ENCODE measurements at regions of chr1 and their contacts with region 1.

Region 1: GRCh38 chr1:23691499-23692307 is at the start of gene RPL11:
- DNase-seq: peak; percentile 89 to 91
- H3K4me3 ChIP-seq: peak within 1 kb of the TSS; percentile 54
- H3K4me3 Mint-ChIP-seq: peak within 1 kb of the TSS; percentile 78
- H3K27ac Mint-ChIP-seq: peak within 1 kb of the TSS; percentile 85
- H3K4me1 ChIP-seq: peaks cover 13% of the 10 kb centered on the region
- H3K4me1 Mint-ChIP-seq: peaks cover 26% of the 10 kb centered on the region
- H3K27me3 ChIP-seq: no peaks in the 10 kb centered on the region
- H3K27me3 Mint-ChIP-seq: no peaks in the 10 kb centered on the region
- CTCF ChIP-seq: peak; percentile 49 to 77
- total RNA-seq, gene RPL11: 1,040 and 1,063 TPM in 2 replicates

Region 2: DNA sequence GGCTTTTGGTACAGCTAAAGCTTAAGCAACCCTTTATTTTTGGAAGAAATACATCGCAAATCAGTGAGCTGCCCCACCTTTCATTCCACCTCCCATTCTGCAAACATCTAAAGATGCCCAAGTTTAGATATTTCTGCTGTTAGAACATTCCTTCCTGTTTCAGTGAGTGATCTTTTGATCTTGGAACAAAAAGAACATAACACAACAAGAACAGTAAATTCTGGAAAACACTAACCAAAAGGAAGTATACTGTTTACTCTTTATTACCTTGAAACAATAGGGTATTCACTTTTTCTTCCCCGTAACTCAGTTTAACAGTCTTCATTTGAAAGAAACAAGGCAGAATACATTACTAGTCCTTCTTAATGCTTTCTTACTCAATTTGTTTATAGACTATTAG is 388.2 kb before region 1 on chr1:
- CTCF ChIA-PET with region 1: interaction called, 10 read pairs
- POLR2A ChIA-PET with region 1: no interaction called
- intact Hi-C with region 1: no loop called
- DNase-seq: no peak
- H3K4me3 ChIP-seq: no peak overlapping the region
- H3K4me3 Mint-ChIP-seq: no peak overlapping the region
- H3K27ac Mint-ChIP-seq: no peak overlapping the region
- H3K4me1 ChIP-seq: no peaks in the 10 kb centered on the region
- H3K4me1 Mint-ChIP-seq: no peaks in the 10 kb centered on the region
- H3K27me3 ChIP-seq: no peaks in the 10 kb centered on the region
- H3K27me3 Mint-ChIP-seq: no peaks in the 10 kb centered on the region
- CTCF ChIP-seq: no peak

Region 3: DNA sequence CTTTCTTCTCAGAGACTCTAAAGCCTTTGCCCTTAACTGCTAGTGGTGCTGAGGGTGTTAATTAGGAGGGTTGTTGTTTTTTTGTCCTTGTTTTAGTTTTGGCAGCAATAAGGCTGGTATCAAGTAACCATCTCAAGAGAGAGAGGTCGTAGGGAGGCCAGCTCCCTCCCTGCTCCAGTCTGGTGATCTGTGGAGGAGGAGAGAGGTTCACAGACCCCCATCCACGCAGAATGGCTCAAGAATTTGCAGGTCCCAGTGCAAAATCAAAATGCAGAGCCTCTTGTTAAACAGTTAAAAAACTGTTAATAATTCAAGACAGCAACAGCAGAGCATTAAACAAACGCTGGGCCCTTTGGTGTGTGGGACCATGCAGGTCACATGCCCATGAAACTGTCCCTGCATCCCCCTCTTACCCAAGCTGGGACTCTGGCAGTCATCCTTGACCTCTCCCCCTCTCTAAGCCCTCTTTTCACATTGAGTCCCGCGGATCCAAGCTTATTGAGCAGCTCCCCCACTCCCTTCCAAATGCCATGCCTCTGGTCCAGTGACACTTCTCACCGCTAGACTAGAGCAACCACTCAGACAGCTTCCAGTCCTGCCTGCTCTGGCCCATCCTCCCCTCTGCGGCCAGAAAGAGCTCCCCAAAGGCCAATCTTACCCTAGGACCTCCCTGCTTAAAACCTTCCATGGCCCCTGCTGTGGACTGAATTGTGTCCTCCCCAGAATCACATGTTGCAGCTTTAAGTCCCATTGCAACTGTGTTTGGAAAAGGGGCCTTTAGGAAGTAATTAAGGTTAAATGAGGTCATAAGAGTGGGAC is 47.8 kb before region 1 on chr1:
- CTCF ChIA-PET with region 1: no interaction called
- POLR2A ChIA-PET with region 1: no interaction called
- intact Hi-C with region 1: no loop called
- DNase-seq: no peak
- H3K4me3 ChIP-seq: no peak overlapping the region
- H3K4me3 Mint-ChIP-seq: no peak overlapping the region
- H3K27ac Mint-ChIP-seq: no peak overlapping the region
- H3K4me1 ChIP-seq: no peaks in the 10 kb centered on the region
- H3K4me1 Mint-ChIP-seq: no peaks in the 10 kb centered on the region
- H3K27me3 ChIP-seq: no peaks in the 10 kb centered on the region
- H3K27me3 Mint-ChIP-seq: no peaks in the 10 kb centered on the region
- CTCF ChIP-seq: no peak

Region 4: DNA sequence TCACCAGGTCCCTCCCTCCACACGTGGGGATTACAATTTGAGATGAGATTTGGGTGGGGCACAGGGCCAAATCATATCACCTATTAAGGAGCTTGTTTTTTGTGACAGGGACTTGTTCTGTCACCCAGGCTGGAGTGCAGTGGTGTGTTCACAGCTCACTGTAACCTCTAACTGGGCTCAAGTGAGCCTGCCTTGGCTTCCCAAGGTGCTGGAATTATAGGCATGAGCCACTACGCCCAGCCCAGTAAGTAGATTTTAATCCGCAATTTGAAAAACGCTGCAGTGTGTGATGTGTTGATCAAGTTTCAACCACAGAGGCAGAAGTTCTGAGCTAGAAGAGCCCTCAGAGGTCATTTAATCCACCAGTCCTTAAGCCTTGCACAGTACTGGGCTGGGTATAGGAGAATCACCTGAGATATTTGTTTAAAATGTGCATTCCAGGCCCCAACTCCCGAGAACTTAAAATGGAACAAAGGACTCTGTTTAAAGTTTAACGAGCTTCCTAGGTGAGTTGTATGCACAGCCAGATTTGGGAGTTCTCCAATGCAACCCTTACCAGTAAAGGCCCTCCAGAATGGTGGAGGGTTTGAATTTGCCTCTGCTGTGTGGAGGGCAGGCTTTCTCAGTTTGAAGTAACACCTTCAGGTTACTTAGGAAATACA is 13.3 kb after region 1 on chr1:
- CTCF ChIA-PET with region 1: interaction called, 6 read pairs
- POLR2A ChIA-PET with region 1: interaction called, 11 read pairs
- intact Hi-C with region 1: no loop called
- DNase-seq: peak in 1 of 2 experiments; percentile 49
- H3K4me3 ChIP-seq: no peak overlapping the region
- H3K4me3 Mint-ChIP-seq: peak overlapping the region; percentile 33
- H3K27ac Mint-ChIP-seq: peak overlapping the region; percentile 79
- H3K4me1 ChIP-seq: peaks cover 17% of the 10 kb centered on the region
- H3K4me1 Mint-ChIP-seq: peaks cover 7% of the 10 kb centered on the region
- H3K27me3 ChIP-seq: no peaks in the 10 kb centered on the region
- H3K27me3 Mint-ChIP-seq: no peaks in the 10 kb centered on the region
- CTCF ChIP-seq: no peak

Region 5: DNA sequence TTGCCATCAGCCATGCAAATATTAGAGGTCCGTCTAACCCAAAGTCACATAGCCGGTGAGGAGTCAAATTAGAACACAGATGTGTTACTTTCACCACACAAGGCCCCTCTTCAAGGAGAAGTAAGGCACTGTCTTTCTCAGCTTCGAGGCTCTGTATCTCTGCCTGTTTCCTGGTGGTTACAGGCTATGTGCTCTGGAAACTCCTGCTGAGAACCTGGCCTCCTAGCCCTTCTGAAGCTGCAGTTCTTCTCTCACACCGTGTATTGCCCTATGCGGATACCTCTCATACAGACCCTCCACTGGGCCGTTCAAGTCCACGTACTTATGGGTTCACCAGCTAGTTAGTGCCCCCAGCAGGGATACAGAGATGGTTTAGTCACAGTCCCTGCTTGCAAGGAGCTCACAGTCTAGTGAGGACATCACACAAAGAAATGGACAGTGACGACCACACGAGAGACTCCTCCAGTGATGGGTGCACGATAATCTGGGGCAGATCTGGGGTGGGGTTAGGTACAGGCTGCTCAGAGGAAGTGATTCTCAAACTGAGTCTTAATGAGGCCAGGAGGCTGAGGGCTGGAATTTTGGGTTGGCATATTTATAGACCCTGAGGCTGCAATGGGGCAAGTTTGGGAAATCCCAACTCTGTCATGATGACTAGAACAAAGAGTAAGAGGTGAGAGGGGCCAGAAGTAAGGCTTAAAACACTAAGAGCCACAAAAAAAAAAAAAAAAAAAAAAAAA is 28.7 kb after region 1 on chr1:
- CTCF ChIA-PET with region 1: no interaction called
- POLR2A ChIA-PET with region 1: no interaction called
- intact Hi-C with region 1: no loop called
- DNase-seq: no peak
- H3K4me3 ChIP-seq: no peak overlapping the region
- H3K4me3 Mint-ChIP-seq: no peak overlapping the region
- H3K27ac Mint-ChIP-seq: no peak overlapping the region
- H3K4me1 ChIP-seq: no peaks in the 10 kb centered on the region
- H3K4me1 Mint-ChIP-seq: peaks cover 7% of the 10 kb centered on the region
- H3K27me3 ChIP-seq: no peaks in the 10 kb centered on the region
- H3K27me3 Mint-ChIP-seq: no peaks in the 10 kb centered on the region
- CTCF ChIP-seq: no peak

Region 6: GRCh38 chr1:23743287-23744052 is 51.8 kb after region 1 on chr1 and contains the start of gene ELOA:
- CTCF ChIA-PET with region 1: interaction called, 4 read pairs
- POLR2A ChIA-PET with region 1: interaction called, 6 read pairs
- intact Hi-C with region 1: loop called (anchors 5 kb)
- DNase-seq: peak; percentile 56 to 73
- H3K4me3 ChIP-seq: peak within 1 kb of the TSS; percentile 92
- H3K4me3 Mint-ChIP-seq: peak within 1 kb of the TSS; percentile 82
- H3K27ac Mint-ChIP-seq: peak within 1 kb of the TSS; percentile 80
- H3K4me1 ChIP-seq: no peaks in the 10 kb centered on the region
- H3K4me1 Mint-ChIP-seq: no peaks in the 10 kb centered on the region
- H3K27me3 ChIP-seq: no peaks in the 10 kb centered on the region
- H3K27me3 Mint-ChIP-seq: no peaks in the 10 kb centered on the region
- CTCF ChIP-seq: no peak
- total RNA-seq, gene ELOA: 29.4 and 31.3 TPM in 2 replicates

Region 7: GRCh38 chr1:23751050-23751814 is 59.5 kb after region 1 on chr1:
- CTCF ChIA-PET with region 1: no interaction called
- POLR2A ChIA-PET with region 1: interaction called, 5 read pairs
- intact Hi-C with region 1: loop called (anchors 1 kb)
- DNase-seq: peak; percentile 54 to 62
- H3K4me3 ChIP-seq: no peak overlapping the region
- H3K4me3 Mint-ChIP-seq: no peak overlapping the region
- H3K27ac Mint-ChIP-seq: peak overlapping the region; percentile 45
- H3K4me1 ChIP-seq: no peaks in the 10 kb centered on the region
- H3K4me1 Mint-ChIP-seq: no peaks in the 10 kb centered on the region
- H3K27me3 ChIP-seq: no peaks in the 10 kb centered on the region
- H3K27me3 Mint-ChIP-seq: no peaks in the 10 kb centered on the region
- CTCF ChIP-seq: peak; percentile 55 to 73

Region 8: GRCh38 chr1:23793018-23793781 is 101.5 kb after region 1 on chr1:
- CTCF ChIA-PET with region 1: no interaction called
- POLR2A ChIA-PET with region 1: no interaction called
- intact Hi-C with region 1: no loop called
- DNase-seq: no peak
- H3K4me3 ChIP-seq: no peak overlapping the region
- H3K4me3 Mint-ChIP-seq: peak overlapping the region; percentile 52
- H3K27ac Mint-ChIP-seq: no peak overlapping the region
- H3K4me1 ChIP-seq: peaks cover 9% of the 10 kb centered on the region
- H3K4me1 Mint-ChIP-seq: no peaks in the 10 kb centered on the region
- H3K27me3 ChIP-seq: no peaks in the 10 kb centered on the region
- H3K27me3 Mint-ChIP-seq: no peaks in the 10 kb centered on the region
- CTCF ChIP-seq: no peak